Mucosa of descending colon (tissue), 3 donors: ENCODE measurements at regions of chr3 and their contacts with region 1.

Region 1: DNA sequence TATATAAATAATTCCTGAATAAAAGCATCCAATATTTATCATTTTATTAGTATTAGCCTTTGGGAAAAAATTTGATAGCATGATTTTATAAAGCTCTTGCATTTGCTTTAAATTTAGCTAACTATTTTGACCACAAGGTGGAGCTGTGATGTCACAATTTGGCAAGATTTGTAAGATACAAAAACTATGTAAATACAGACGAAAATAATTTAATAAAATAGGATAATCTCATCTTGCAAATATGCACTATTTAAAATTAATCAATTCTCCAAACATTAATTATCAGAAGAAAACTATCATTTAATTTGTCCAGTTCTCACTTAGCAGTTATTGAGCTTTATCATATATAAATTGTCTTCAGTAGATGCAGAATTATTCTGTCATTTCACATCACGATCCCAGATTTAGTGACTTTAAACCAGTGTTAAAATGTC is 95.4 kb downstream of the PLOD2 start:
- DNase-seq: peak in 1 of 3 donors; percentile 66
- ATAC-seq: no peak
- H3K4me3 ChIP-seq: no peak overlapping the region
- H3K4me1 ChIP-seq: no peaks in the 10 kb centered on the region
- CTCF ChIP-seq: no peak

Region 2: DNA sequence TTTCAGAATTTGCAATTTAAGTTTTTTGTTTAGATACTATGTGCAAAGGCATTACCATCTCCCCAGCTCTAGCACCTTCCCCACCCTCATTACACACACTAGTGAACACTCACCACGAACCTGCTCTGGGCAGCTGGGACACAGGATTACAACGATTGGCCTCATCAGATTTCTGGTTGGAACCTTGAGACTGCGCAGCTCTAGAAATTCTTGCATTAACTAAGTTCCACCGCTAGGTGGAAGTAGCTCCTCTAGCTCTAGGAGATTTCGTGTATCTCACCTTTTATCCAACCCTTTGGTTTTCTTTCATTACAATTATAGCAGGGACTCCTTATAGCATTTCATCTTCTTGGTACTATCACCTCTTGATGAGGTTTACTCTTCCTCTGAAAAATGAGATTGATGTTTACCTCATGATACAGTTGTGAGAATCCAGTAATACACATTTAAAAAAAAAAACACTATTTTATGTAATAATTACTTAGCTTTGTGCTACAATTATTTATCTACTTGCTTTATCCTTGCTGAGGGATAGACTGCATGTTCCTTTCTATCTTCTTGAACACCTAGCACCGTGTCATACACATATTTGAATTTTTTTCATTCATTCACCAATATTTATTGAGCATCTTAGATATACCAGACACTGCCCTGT is 124.1 kb after region 1 on chr3:
- intact Hi-C with region 1: loop called in 1 of 2 experiments (anchors 5 kb)
- DNase-seq: no peak
- ATAC-seq: peak; percentile 86
- H3K4me3 ChIP-seq: no peak overlapping the region
- H3K4me1 ChIP-seq: no peaks in the 10 kb centered on the region
- CTCF ChIP-seq: peak; percentile 12